Right ventricle myocardium inferior (tissue), 1 donor: ENCODE measurements at regions of chr3 and their contacts with region 1.

Region 1: GRCh38 chr3:150727653-150728502 is 24.2 kb upstream of the ERICH6 start:
- DNase-seq: peak; percentile 70
- ATAC-seq: peak; percentile 85

Region 2: GRCh38 chr3:150666167-150666566 is 61.7 kb before region 1 on chr3:
- intact Hi-C with region 1: no loop called
- DNase-seq: no peak
- ATAC-seq: no peak

Region 3: DNA sequence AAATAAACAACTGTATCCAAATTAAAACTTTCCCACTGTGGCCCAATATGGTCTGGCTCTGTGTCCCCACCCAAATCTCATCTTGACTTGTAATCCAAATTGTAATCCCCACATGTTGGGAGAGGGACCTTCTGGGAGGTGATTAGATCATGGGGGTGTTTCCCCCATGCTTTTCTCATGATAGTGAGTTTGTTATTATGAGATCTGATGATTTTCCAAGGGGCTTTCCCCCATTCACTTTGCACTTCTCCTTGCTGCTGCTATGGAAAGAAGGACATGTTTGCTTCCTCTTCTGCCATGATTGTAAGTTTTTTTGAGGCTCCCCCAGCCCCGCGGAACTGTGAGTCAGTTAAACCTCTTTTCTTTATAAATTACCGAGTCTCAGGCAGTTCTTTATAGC is 122.3 kb after region 1 on chr3:
- intact Hi-C with region 1: loop called (anchors 5 kb)
- DNase-seq: no peak
- ATAC-seq: no peak